A673 (cell line): ENCODE measurements at regions of chr1 and their contacts with region 1.

Region 1: GRCh38 chr1:158998781-158999161 is 10.9 kb upstream of the IFI16 start:
- DNase-seq: peak; percentile 71
- H3K4me3 ChIP-seq: peak overlapping the region; percentile 56
- H3K27ac ChIP-seq: peak overlapping the region; percentile 60
- H3K4me1 ChIP-seq: peaks cover 26% of the 10 kb centered on the region
- H3K27me3 ChIP-seq: no peaks in the 10 kb centered on the region
- CTCF ChIP-seq: peak; percentile 91

Region 2: GRCh38 chr1:158506369-158506987 is 492.3 kb before region 1 on chr1:
- CTCF ChIA-PET with region 1: interaction called, 5 read pairs
- POLR2A ChIA-PET with region 1: no interaction called
- intact Hi-C with region 1: loop called (anchors 2 kb)
- DNase-seq: peak; percentile 65
- H3K4me3 ChIP-seq: no peak overlapping the region
- H3K27ac ChIP-seq: no peak overlapping the region
- H3K4me1 ChIP-seq: no peaks in the 10 kb centered on the region
- H3K27me3 ChIP-seq: peaks cover 18% of the 10 kb centered on the region
- CTCF ChIP-seq: peak; percentile 78

Region 3: DNA sequence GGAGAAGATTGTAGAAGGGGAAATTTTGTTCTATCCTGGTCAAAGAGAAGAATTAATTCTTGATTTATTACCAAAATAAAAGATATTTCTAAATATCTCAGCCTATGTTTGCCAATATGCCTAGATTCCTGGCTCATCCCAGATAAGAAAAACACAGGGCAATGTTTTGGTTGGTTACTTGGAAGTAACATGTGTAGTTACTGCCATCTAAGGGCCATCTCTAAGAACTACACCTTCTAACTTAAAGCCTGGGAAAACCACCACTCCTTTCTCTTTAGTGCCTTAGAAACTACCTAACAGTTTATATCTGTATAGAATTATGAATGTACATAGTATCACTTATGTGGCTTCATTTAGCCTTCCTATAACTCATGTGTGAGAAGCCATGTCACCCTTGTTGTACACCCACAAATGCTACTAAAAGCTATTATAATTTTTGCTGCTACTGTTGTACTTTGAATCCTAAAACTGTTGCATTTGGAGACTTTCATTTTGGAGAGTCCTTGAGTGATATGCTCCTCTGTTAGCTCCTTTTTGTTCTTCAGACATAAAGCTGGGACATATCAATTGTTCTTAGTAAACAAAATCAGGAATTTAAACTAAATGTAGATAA is 73.3 kb after region 1 on chr1:
- CTCF ChIA-PET with region 1: no interaction called
- POLR2A ChIA-PET with region 1: no interaction called
- intact Hi-C with region 1: loop called (anchors 5 kb)
- DNase-seq: peak; percentile 72
- H3K4me3 ChIP-seq: no peak overlapping the region
- H3K27ac ChIP-seq: no peak overlapping the region
- H3K4me1 ChIP-seq: no peaks in the 10 kb centered on the region
- H3K27me3 ChIP-seq: peaks cover 8% of the 10 kb centered on the region
- CTCF ChIP-seq: peak; percentile 77